Activated CD4-positive, alpha-beta T cell treated with anti-CD3 and anti-CD28 coated beads for 36 hours (primary cell): ENCODE measurements at regions of chr3 and their contacts with region 1.

Region 1: GRCh38 chr3:15098503-15099363 is at the start of gene RBSN:
- DNase-seq: peak; percentile 98
- ATAC-seq: peak; percentile 85
- H3K4me3 Mint-ChIP-seq: peak within 1 kb of the TSS; percentile 85
- H3K27ac Mint-ChIP-seq: peak within 1 kb of the TSS; percentile 91
- H3K4me1 Mint-ChIP-seq: peaks cover 18% of the 10 kb centered on the region
- H3K27me3 Mint-ChIP-seq: peaks cover 2% of the 10 kb centered on the region
- total RNA-seq, gene RBSN: 13.5 to 15.0 TPM

Region 2: GRCh38 chr3:14144423-14145075 is 954.2 kb before region 1 on chr3:
- CTCF ChIA-PET with region 1: no interaction called
- POLR2A ChIA-PET with region 1: no interaction called
- intact Hi-C with region 1: loop called in 1 of 2 experiments (anchors 2 kb)
- DNase-seq: peak; percentile 71
- ATAC-seq: peak; percentile 85
- H3K4me3 Mint-ChIP-seq: no peak overlapping the region
- H3K27ac Mint-ChIP-seq: peak overlapping the region; percentile 86
- H3K4me1 Mint-ChIP-seq: peaks cover 56% of the 10 kb centered on the region
- H3K27me3 Mint-ChIP-seq: no peaks in the 10 kb centered on the region

Region 3: GRCh38 chr3:14651440-14652251 is 447.1 kb before region 1 on chr3 and contains the start of gene CCDC174:
- CTCF ChIA-PET with region 1: no interaction called
- POLR2A ChIA-PET with region 1: no interaction called
- intact Hi-C with region 1: loop called in 1 of 2 experiments (anchors 1 kb)
- DNase-seq: peak; percentile 95
- ATAC-seq: peak; percentile 99
- H3K4me3 Mint-ChIP-seq: peak within 1 kb of the TSS; percentile 93
- H3K27ac Mint-ChIP-seq: peak within 1 kb of the TSS; percentile 96
- H3K4me1 Mint-ChIP-seq: peaks cover 40% of the 10 kb centered on the region
- H3K27me3 Mint-ChIP-seq: no peaks in the 10 kb centered on the region
- total RNA-seq, gene CCDC174: 16.2 to 18.2 TPM

Region 4: DNA sequence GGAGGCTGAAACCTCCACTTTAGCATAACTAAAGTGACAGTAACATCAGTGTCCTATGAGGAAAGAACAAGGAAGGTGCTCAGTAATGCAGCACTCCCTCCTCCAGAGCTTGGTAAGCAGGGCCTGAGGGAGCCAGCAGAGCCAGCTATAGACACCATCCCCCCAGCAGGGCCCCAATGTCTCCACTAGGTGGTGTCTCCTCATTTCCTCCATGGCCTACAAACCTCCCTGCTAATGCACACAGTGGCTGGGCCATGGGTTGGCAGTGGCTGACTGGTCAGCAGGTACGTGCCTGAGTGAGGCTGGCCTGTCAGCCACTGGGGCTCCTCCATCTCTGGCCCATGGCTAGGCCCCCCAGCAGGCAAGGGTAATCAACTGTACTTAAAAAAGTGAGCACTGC is 47.2 kb before region 1 on chr3:
- CTCF ChIA-PET with region 1: interaction called, 3 read pairs
- POLR2A ChIA-PET with region 1: no interaction called
- intact Hi-C with region 1: loop called in 1 of 2 experiments (anchors 2 kb)
- DNase-seq: peak; percentile 67
- ATAC-seq: peak; percentile 81
- H3K4me3 Mint-ChIP-seq: no peak overlapping the region
- H3K27ac Mint-ChIP-seq: peak overlapping the region; percentile 9
- H3K4me1 Mint-ChIP-seq: peaks cover 30% of the 10 kb centered on the region
- H3K27me3 Mint-ChIP-seq: no peaks in the 10 kb centered on the region

Region 5: GRCh38 chr3:15361494-15362212 is 262.9 kb after region 1 on chr3:
- CTCF ChIA-PET with region 1: no interaction called
- POLR2A ChIA-PET with region 1: interaction called, 3 read pairs
- intact Hi-C with region 1: loop called in 1 of 2 experiments (anchors 5 kb)
- DNase-seq: peak; percentile 83
- ATAC-seq: peak; percentile 76
- H3K4me3 Mint-ChIP-seq: peak overlapping the region; percentile 53
- H3K27ac Mint-ChIP-seq: peak overlapping the region; percentile 87
- H3K4me1 Mint-ChIP-seq: peaks cover 38% of the 10 kb centered on the region
- H3K27me3 Mint-ChIP-seq: peaks cover 2% of the 10 kb centered on the region

Region 6: DNA sequence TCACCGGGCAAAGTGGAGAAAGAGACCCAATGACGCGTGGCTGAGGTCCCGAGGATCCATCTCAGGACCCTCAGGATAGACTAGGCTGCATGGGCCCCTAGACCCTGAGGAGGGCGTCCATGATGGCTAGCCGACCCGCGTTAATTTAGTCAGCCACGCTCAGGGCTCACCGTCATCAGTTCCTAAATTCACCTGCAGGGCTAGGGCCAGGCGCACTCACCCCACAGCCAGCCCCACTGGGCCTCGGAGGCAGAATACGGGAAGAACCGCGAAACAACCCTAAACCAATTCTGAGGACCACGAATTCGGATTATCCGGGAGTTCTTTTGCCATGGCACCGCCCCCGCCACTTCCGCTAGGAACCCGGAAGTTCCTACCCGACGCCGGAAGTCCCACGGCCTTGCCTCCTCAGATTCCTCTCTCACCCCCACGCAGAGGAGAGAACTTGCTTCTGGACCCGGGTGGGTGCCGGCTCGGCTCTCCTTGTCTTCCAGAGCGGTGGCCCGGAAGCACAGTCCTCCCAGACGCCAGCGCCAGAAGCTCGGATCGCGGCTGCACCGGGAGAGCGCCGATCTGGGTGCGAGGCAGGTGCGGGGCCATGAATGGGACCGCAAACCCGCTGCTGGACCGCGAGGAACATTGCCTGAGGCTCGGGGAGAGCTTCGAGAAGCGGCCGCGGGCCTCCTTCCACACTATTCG is 328.6 kb after region 1 on chr3 and contains the starts of genes EAF1 and METTL6:
- CTCF ChIA-PET with region 1: no interaction called
- POLR2A ChIA-PET with region 1: no interaction called
- intact Hi-C with region 1: loop called in 1 of 2 experiments (anchors 1 kb)
- DNase-seq: peak; percentile 92
- ATAC-seq: peak; percentile 83
- H3K4me3 Mint-ChIP-seq: peak within 1 kb of the TSS; percentile 90
- H3K27ac Mint-ChIP-seq: peak within 1 kb of the TSS; percentile 97
- H3K4me1 Mint-ChIP-seq: peaks cover 45% of the 10 kb centered on the region
- H3K27me3 Mint-ChIP-seq: no peaks in the 10 kb centered on the region
- total RNA-seq, gene EAF1: 21.2 to 25.6 TPM
- total RNA-seq, gene METTL6: 13.0 to 19.5 TPM